Head of caudate nucleus (tissue), 42 donors: ENCODE measurements at regions of chr14 and their contacts with region 1.

Region 1: GRCh38 chr14:73785873-73786695 is 65.5 kb upstream of the PTGR2 start:
- DNase-seq: peak; percentile 40 to 83 (median 66)

Region 2: GRCh38 chr14:73675037-73675436 is 111.0 kb before region 1 on chr14:
- intact Hi-C with region 1: no loop called
- DNase-seq: no peak

Region 3: DNA sequence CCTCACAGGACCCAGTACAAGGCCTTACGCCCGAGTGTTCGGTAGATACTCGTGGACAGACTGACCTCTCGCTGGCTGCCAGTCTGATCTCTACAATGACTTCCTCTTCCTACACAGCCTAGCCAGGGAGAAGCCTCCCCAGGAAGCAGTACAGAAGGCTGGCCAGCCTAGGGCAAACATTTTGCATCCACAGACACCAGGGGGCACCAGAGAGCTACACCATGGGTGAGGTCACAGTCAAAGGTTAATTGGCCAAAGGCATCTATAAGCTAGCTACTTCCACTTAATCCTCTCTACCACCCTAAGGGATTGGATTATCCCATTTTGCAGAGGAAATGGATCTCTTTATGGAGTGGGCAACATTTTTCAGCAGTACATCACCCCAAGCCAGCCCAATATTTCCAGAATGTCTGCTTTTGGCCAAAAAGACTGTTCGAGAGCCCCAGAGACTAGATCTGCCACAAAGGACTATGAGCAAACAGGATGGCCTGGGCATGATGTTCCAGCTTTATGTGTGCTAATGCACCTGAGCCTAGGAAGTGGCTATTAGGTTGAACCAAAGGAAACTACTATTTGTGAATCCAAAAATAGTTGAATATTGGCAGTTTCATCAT is 57.3 kb before region 1 on chr14:
- intact Hi-C with region 1: no loop called
- DNase-seq: peak; percentile 62 to 96 (median 86)

Region 4: GRCh38 chr14:73753959-73754882 is 31.9 kb before region 1 on chr14:
- intact Hi-C with region 1: loop called (anchors 5 kb)
- DNase-seq: peak in 41 of 42 donors; percentile 36 to 82 (median 66)